ENCODE measurements at regions of chr1 and their contacts with region 1.

Region 1: DNA sequence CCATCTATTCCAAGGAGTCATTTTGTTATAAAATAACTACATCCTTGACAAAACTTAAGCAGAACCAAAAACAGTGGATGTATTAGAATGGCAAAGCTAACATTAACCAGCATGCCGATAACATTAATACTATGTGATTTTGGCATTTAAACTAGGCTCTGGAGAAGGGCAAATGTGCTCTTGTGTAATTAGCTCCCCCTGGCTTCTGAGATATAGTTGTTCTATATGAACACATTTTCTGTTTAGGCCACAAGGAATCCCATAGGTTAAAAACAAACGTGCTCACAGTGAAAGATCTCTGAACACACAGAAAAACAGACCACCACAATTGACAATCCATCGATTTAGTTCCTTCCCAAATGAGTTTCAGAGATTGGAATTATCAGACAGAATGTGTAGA is 57.4 kb upstream of the TARS2 start:
- DNase-seq: no peak
- ATAC-seq: no peak
- H3K4me3 ChIP-seq: no peak overlapping the region
- H3K27ac ChIP-seq: no peak overlapping the region
- H3K4me1 ChIP-seq: no peaks in the 10 kb centered on the region
- H3K27me3 ChIP-seq: no peaks in the 10 kb centered on the region
- CTCF ChIP-seq: peak in 6 of 9 donors; percentile 15 to 35 (median 20)

Region 2: DNA sequence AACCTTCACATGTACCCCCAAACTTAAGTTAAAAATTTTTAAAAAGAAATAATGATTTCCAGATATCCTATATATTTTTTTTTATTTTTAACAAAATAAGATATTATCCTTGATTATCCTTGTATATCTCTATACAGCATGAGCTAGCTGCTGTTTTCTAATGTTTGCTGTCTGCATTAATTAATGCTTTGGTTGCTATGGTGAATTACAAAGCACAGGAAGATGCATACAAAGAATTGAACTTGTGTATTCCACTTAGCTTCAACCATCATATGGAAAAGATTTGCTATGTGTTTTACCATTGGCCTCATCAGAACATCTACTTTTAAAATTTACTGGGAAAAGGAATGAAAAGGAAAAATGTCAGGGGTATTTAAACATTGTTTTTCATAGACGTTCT is 326.8 kb before region 1 on chr1:
- intact Hi-C with region 1: no loop called
- DNase-seq: no peak
- ATAC-seq: no peak
- H3K4me3 ChIP-seq: no peak overlapping the region
- H3K27ac ChIP-seq: no peak overlapping the region
- H3K4me1 ChIP-seq: peaks cover 0 to under 1% (median 0%) of the 10 kb centered on the region in 9 donors
- H3K27me3 ChIP-seq: no peaks in the 10 kb centered on the region
- CTCF ChIP-seq: no peak

Region 3: GRCh38 chr1:150363426-150364230 is 66.2 kb before region 1 on chr1 and contains the start of gene RPRD2:
- intact Hi-C with region 1: loop called in 1 of 10 experiments (anchors 10 kb)
- DNase-seq: peak; percentile 99 to 100
- ATAC-seq: peak; percentile 98 to 99 (median 98)
- H3K4me3 ChIP-seq: peak within 1 kb of the TSS; percentile 51 to 94 (median 76)
- H3K27ac ChIP-seq: peak within 1 kb of the TSS; percentile 94 to 98 (median 97)
- H3K4me1 ChIP-seq: peaks cover 3 to 33% (median 19%) of the 10 kb centered on the region in 9 donors
- H3K27me3 ChIP-seq: no peaks in the 10 kb centered on the region
- CTCF ChIP-seq: peak in 2 of 9 donors; percentile 11 to 20
- total RNA-seq, gene RPRD2: 21.9 to 34.5 (median 28.2) TPM